ENCODE measurements at regions of chr7 and their contacts with region 1.

Region 1: DNA sequence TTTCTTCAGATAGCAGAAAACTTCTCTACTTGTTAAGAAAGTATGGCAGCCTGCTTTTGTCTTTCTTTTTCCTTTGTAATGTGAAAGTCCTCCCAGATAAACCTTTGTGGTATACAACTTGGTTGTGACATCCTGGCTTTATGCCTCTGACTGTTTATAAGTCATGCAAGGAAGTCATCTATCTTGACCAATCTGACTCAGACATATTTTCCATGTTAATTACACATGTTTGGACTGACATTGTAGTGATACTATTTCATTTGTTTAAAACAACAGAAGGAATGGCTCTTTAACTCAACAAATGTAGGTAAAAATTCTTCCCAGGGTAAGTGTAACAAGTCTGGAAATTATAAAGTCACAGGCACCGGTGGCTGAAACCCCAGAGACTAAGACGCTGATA is 341.6 kb upstream of the MEOX2 start:
- DNase-seq: no peak
- H3K4me3 ChIP-seq: no peak overlapping the region
- H3K27ac ChIP-seq: peak overlapping the region; percentile 58 to 68 (median 64)
- H3K4me1 ChIP-seq: peaks cover 21 to 60% (median 56%) of the 10 kb centered on the region in 4 donors
- H3K27me3 ChIP-seq: no peaks in the 10 kb centered on the region
- CTCF ChIP-seq: no peak
- EP300 ChIP-seq: no peak
- POLR2A ChIP-seq: no peak

Region 2: DNA sequence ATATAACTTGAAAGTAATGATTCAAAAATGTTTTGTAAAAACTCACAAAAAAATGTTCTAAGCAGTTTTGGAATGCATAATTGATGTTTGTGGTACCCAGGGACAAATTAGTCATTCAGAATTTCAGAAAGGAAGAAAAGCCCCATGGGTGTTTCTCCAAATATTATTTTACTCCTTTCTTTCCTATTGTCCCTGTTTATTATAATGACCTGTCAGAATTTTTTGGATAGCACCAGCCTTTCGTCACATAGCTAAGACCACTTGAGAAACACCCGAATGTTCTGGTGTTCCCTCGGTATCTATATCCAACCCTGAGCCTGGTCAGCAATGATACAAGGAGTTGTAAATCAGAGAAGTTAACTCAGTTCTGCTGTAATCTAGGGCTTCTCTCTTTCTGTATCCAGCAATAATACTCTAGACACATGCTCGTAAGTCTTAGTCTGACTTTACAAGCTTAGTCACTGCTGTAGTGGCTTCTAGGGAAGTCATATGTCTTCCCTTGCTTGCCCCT is 276.9 kb before region 1 on chr7:
- intact Hi-C with region 1: loop called (anchors 10 kb)
- DNase-seq: no peak
- H3K4me3 ChIP-seq: no peak overlapping the region
- H3K27ac ChIP-seq: peak overlapping the region; percentile 27 to 40 (median 34)
- H3K4me1 ChIP-seq: peaks cover 22 to 82% (median 61%) of the 10 kb centered on the region in 4 donors
- H3K27me3 ChIP-seq: no peaks in the 10 kb centered on the region
- CTCF ChIP-seq: no peak
- EP300 ChIP-seq: no peak
- POLR2A ChIP-seq: no peak

Region 3: DNA sequence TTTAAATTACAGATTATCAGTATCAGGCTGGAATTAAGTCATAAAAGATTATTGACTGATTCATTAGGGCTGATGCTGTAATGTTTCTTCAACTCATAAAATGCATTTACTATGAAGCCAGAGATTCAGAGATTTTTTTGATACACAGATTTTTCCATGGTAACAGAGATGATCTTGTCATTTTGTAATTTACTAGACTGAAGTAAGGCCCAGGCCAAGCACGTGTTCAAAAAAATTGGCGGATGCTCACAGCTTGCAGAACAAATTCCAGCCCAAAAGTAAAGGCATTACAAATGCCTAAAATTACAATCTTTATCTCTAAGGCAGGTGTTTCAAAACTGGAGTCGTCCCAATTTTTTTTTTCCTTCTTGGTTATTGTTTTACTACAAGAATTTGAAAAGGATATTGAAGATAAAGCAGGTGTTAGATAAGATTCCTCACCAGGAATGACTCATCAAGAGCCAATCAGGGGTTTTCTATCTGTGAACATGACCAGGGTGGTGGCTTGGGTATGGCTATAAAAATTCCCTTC is 263.2 kb before region 1 on chr7:
- intact Hi-C with region 1: no loop called
- DNase-seq: no peak
- H3K4me3 ChIP-seq: no peak overlapping the region
- H3K27ac ChIP-seq: peak overlapping the region; percentile 6 to 29 (median 15)
- H3K4me1 ChIP-seq: peaks cover 0 to 15% (median 7%) of the 10 kb centered on the region in 4 donors
- H3K27me3 ChIP-seq: no peaks in the 10 kb centered on the region
- CTCF ChIP-seq: no peak
- EP300 ChIP-seq: no peak
- POLR2A ChIP-seq: no peak

Region 4: DNA sequence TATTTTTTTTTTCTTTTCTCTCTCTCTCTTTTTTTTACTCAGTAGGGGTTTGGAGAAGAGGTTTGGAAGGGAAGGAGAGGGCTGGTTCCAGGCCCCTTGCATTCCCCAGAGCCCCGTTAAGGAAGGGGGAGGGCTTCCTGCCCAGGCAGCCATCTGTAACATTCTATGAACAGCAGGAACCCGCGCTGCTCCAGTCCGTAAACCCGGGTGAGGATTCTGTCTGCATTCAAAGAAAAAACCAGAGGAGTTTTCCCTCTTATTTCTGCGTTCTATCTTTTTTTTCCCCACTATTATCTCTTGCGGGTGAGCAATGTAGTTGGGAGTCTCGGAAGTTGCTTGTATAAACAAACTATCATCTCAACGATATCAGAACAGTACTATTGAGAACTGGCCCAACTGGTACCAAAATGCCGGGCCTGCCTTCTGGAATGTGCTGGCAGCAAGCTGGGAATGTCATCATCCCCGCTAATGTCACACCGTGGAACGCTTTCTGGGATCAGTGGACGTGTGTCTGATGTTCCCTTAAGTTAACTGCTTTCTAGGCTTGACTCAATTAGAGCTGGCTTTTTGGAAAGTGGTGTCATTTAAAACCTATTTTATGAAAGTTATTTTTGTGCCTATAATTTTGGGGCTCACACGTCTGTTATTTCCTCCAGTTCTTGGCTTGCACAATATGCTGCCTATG is 188.5 kb before region 1 on chr7:
- intact Hi-C with region 1: loop called (anchors 10 kb)
- DNase-seq: no peak
- H3K4me3 ChIP-seq: peak overlapping the region; percentile 35 to 54 (median 44)
- H3K27ac ChIP-seq: peak overlapping the region; percentile 64 to 78 (median 70)
- H3K4me1 ChIP-seq: peaks cover 17 to 30% (median 26%) of the 10 kb centered on the region in 4 donors
- H3K27me3 ChIP-seq: no peaks in the 10 kb centered on the region
- CTCF ChIP-seq: no peak
- EP300 ChIP-seq: no peak
- POLR2A ChIP-seq: no peak

Region 5: GRCh38 chr7:16242920-16243319 is 214.8 kb after region 1 on chr7:
- intact Hi-C with region 1: no loop called
- DNase-seq: no peak
- H3K4me3 ChIP-seq: no peak overlapping the region
- H3K27ac ChIP-seq: no peak overlapping the region
- H3K4me1 ChIP-seq: no peaks in the 10 kb centered on the region
- H3K27me3 ChIP-seq: no peaks in the 10 kb centered on the region
- CTCF ChIP-seq: no peak
- EP300 ChIP-seq: no peak
- POLR2A ChIP-seq: no peak

Measured in esophagus muscularis mucosa (tissue), 4 donors.